GM12878 (cell line): ENCODE measurements at regions of chr4 and their contacts with region 1.

Region 1: GRCh38 chr4:174277433-174277832 is 6.0 kb downstream of the FBXO8 start:
- DNase-seq: no peak
- ATAC-seq: no peak
- H3K4me3 ChIP-seq: no peak overlapping the region
- H3K27ac ChIP-seq: no peak overlapping the region
- H3K4me1 ChIP-seq: no peaks in the 10 kb centered on the region
- H3K27me3 ChIP-seq: no peaks in the 10 kb centered on the region
- CTCF ChIP-seq: no peak
- EP300 ChIP-seq: no peak
- POLR2A ChIP-seq: no peak
- RAD21 ChIP-seq: no peak

Region 2: GRCh38 chr4:174244441-174244840 is 33.0 kb before region 1 on chr4:
- CTCF ChIA-PET with region 1: no interaction called
- POLR2A ChIA-PET with region 1: no interaction called
- RAD21 ChIA-PET with region 1: no interaction called
- SMC1A ChIA-PET with region 1: interaction called, 4 read pairs
- in situ Hi-C with region 1: no loop called
- intact Hi-C with region 1: loop called (anchors 1 kb)
- DNase-seq: no peak
- ATAC-seq: peak; percentile 71
- H3K4me3 ChIP-seq: no peak overlapping the region
- H3K27ac ChIP-seq: no peak overlapping the region
- H3K4me1 ChIP-seq: no peaks in the 10 kb centered on the region
- H3K27me3 ChIP-seq: no peaks in the 10 kb centered on the region
- CTCF ChIP-seq: no peak
- EP300 ChIP-seq: no peak
- POLR2A ChIP-seq: no peak
- RAD21 ChIP-seq: no peak